HEK293 (cell line): ENCODE measurements at regions of chr2 and their contacts with region 1.

Region 1: GRCh38 chr2:96336104-96336775 is 674 bp downstream of the NCAPH start:
- H3K4me3 ChIP-seq: peak overlapping the region; percentile 72
- H3K27ac ChIP-seq: peak overlapping the region; percentile 93
- H3K4me1 ChIP-seq: peaks cover 5% of the 10 kb centered on the region; the same call in 1 of the 2 replicates
- CTCF ChIP-seq: no peak

Region 2: DNA sequence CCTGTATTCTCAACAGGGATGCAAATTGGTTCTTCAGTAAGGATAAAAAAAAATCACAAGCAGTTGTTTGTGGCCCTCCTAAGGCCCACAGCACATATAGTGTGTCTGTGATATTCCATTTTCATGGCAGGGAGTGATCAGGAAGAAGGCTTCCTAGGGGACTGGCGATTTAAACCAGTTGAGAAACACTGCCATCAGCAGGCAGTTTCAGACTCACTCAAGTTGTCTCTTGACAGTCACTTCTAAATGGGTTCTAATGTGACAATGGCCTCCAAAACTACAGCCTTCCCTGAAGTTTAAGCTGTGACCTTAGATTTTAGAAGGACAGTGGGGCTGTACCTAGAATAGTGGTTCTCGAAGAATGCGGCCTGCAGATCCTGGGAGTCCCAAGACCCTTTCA is 64.2 kb before region 1 on chr2:
- CTCF ChIA-PET with region 1: no interaction called
- POLR2A ChIA-PET with region 1: no interaction called
- H3K4me3 ChIP-seq: no peak overlapping the region
- H3K27ac ChIP-seq: no peak overlapping the region
- H3K4me1 ChIP-seq: no peaks in the 10 kb centered on the region
- CTCF ChIP-seq: no peak

Region 3: DNA sequence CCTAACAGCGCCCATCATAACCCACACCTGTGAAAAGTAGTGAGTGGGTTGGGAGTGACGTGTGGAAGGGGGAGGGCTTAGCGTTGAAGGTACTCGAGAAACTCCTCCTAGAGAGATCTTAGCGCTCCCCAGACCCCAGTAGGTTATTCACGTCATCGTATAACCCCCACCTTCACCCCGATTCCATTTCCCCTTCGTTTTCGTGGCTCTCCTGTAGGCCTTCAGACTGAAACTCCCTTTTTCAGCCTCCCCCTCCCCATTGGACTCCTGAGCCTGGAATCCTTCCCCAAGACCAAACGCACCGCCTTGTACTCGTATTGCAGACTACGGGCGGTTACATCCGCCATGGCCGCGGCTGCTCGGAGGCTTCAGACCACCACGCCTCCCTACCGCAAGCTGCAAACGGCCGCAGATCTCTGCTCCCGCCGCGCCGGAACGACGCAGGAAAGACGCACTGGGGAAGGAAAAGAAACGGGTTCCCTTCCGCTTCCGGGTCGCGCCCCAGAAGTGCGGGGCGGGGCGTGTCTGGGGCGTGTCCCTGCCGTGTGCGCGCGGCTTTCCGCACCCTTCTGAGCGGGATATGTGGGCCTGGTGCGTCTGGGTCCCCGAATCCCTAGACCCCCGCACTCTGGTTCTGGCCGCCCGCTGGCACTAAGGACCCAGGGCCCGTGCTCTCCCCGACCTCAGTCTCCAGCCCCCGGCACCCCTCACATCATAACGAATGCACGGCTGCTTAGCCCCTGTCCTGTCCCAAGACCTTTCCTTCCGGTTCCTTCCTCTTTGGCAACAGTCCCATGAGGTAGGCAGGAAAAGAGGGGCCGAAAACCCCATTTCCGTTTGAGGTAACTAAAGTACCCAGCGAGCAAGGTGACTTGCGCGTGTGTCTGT is 30.9 kb before region 1 on chr2 and contains the start of gene SNRNP200:
- CTCF ChIA-PET with region 1: no interaction called
- POLR2A ChIA-PET with region 1: interaction called, 16 read pairs
- H3K4me3 ChIP-seq: peak within 1 kb of the TSS; percentile 76
- H3K27ac ChIP-seq: peak within 1 kb of the TSS; percentile 69
- H3K4me1 ChIP-seq: peaks cover 9% of the 10 kb centered on the region; the same call in 1 of the 2 replicates
- CTCF ChIP-seq: no peak

Region 4: DNA sequence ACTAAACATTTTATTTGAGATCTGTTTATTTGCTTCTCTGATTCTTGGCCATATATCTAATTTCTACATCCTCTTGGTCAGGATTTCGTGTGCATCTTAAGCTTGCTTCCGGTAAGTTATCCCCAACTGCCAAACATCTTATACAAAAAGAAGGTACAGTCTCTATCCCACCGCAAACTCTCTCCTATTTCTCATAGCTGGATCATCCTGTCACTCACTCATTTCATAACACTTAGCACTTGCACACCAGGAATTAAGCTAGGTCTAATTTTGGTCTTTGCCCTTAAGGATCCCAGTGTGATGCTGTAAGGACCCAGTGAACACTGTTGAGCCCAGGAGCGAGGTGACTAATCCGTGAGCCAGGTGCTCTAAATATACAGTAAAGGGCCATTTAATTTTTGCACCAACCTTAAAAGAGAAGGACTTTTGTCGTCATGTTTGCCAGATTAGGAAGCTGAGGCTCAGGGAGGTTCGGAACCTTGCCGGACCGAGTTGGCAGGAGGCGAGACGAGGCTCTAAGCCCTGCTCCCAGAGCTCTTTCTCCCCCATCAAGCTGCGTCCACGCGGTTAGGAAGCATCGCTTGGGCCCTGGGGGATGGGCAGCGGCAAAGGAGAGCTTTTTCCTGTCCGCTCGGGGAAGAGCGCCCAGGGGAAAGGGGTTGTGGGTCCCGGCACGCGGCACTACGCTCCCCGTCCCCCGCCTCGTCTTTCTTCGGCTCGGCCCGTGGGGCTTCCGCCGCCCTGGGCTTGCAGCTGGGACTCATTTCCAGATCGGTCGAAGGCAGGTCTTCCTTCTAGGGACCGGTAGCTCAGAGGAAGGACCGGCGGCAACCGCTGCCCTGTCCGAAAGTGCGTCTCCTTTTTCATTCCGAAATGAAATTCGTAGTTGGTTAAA is 15.3 kb before region 1 on chr2:
- CTCF ChIA-PET with region 1: interaction called, 6 read pairs
- POLR2A ChIA-PET with region 1: interaction called, 43 read pairs
- H3K4me3 ChIP-seq: peak overlapping the region; percentile 53
- H3K27ac ChIP-seq: peak overlapping the region; percentile 17; the same call in 1 of the 2 replicates
- H3K4me1 ChIP-seq: no peaks in the 10 kb centered on the region
- CTCF ChIP-seq: no peak

Region 5: DNA sequence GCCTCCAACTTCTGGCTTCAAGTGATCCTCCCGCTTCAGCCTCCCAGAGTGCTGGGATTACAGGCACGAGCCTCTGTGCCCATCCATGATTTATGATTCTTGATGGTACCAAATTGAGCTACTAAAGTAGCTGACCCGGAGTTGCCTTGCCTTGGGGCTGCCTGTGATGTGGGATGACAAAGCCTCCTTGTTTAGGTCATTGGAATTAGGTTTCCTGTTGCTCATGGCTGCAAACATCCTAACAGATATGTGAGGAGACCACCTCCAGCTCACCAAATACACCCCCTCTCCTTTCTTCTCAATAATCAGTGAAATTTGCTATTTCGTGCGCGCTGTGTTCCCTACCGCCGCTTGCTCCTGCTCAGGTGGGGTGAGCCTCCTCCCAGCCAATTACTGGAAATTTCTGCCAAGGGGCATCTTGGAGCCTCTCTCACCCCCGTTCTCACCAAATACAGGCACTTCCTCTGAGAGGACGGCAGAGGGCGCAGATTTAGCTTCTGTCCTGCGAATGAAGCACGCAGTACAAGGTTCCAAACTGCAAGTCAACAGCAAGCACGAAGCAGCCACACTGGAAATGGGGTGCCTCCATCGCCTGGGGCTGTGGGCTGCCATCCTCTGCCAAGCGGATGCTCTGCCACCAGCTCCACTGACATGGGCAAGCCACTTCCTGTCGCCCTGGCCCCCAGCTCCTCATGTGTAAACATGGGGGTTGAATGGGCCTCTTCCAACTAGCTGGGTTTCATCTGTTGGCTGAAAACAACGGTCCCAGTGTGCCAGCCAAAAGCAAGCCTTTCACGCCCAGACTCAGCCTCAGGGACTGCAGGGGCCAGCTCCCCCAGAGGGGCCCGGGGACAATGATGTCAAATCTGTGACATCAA is 71.0 kb after region 1 on chr2:
- CTCF ChIA-PET with region 1: no interaction called
- POLR2A ChIA-PET with region 1: no interaction called
- H3K4me3 ChIP-seq: no peak overlapping the region
- H3K27ac ChIP-seq: no peak overlapping the region
- H3K4me1 ChIP-seq: peaks cover 8% of the 10 kb centered on the region
- CTCF ChIP-seq: peak; percentile 80